OCI-LY7 (cell line): ENCODE measurements at regions of chr6 and their contacts with region 1.

Region 1: GRCh38 chr6:87929843-87930288 is 117.8 kb upstream of the SPACA1 start:
- DNase-seq: peak; percentile 95
- H3K4me3 ChIP-seq: peak overlapping the region; percentile 10
- H3K27ac ChIP-seq: peak overlapping the region; percentile 99
- H3K4me1 ChIP-seq: peaks cover 91% of the 10 kb centered on the region
- CTCF ChIP-seq: peak; percentile 98

Region 2: DNA sequence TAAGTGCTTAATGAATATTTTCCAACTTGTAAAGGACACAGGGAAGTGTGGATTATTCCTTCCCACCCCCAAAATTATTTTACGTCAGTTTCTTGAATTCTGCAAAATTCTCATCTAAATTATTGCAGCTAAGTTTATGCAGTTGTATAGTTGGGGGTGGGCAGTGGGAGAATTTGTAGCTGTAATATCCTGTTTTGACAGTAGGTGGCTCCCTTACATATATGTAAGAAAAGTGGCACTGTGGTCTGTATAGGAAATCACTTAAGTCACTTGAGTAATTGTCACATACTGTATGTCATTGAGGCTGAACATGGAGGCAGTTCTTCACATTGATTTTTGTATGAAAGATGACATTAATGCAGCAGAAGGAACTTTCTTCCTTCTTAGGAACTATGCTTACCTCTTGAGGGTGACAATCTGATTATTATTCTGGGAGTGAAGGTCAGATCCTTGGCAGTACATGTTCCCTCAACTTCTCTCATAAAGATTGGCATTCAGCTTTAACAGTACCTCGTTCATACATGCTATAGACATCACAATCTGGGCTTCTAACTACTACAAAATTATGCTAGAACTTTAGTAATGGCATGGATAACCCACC is 536.7 kb before region 1 on chr6:
- CTCF ChIA-PET with region 1: no interaction called
- POLR2A ChIA-PET with region 1: no interaction called
- intact Hi-C with region 1: loop called (anchors 10 kb)
- DNase-seq: peak; percentile 88
- H3K4me3 ChIP-seq: no peak overlapping the region
- H3K27ac ChIP-seq: no peak overlapping the region
- H3K4me1 ChIP-seq: peaks cover 19% of the 10 kb centered on the region
- CTCF ChIP-seq: peak; percentile 94

Region 3: DNA sequence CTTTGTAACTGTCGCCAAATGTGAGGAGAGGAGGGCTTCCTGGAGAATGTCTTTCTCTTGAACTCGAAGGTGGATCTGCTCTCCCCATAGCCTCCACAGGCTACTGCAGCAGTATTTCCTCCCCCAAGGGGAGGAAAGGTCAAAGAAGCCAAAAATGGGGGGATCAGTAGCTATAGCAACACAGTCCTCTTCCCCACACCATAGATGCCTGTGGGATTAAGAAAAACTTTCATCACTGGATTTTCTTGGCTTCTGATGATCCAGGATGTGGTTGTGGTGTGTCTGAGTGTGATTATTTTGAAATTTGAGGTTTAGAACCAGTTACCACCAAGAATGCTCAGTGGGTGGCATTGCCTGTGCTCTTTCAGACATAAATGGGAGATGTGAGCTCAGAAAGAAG is 22.3 kb before region 1 on chr6:
- CTCF ChIA-PET with region 1: interaction called, 3 read pairs
- POLR2A ChIA-PET with region 1: interaction called, 70 read pairs
- intact Hi-C with region 1: no loop called
- DNase-seq: peak; percentile 72
- H3K4me3 ChIP-seq: no peak overlapping the region
- H3K27ac ChIP-seq: peak overlapping the region; percentile 99
- H3K4me1 ChIP-seq: peaks cover 98% of the 10 kb centered on the region
- CTCF ChIP-seq: no peak

Region 4: DNA sequence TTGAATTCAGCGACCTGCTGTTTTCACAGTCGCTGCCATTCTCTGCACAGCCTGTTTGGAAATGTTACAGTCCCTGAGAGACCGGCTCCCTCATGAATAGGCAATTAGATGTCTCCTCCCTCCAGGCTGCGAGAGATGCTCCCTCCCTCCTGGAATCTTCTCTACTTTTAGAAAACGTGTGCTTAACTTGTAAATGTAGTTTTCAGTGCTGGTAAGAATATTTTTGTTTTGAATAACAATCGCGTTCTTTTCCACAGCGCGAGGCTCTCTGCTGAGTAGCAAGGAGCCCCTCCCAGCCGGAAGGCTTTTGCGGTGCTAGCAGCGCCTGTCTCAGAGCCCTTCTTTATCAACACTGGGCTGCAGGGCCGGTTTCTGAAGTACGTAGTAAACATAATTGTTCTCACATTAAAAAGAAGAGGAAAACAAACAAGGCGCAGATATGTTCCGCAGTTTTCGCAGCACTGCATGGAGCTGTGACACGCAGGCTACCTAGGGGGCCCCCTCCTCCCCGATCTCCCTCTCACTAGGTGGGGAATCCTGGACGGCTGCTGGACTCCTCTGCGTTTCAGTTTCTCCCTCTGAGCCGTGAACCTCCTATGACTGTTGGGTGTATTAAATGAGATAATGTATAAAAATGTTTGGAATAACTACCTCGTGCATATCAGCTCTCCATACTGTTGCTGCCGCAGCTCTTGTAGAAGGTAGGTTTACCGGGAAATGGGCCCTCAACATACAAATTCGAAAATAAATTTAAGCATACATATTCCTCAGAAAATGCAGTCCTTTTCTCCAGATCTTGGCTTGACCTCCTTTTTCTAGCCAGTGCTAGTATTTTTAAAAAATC is 38.8 kb after region 1 on chr6:
- CTCF ChIA-PET with region 1: no interaction called
- POLR2A ChIA-PET with region 1: no interaction called
- intact Hi-C with region 1: no loop called
- DNase-seq: peak; percentile 58
- H3K4me3 ChIP-seq: peak overlapping the region; percentile 65
- H3K27ac ChIP-seq: no peak overlapping the region
- H3K4me1 ChIP-seq: peaks cover 13% of the 10 kb centered on the region
- CTCF ChIP-seq: peak; percentile 75

Region 5: DNA sequence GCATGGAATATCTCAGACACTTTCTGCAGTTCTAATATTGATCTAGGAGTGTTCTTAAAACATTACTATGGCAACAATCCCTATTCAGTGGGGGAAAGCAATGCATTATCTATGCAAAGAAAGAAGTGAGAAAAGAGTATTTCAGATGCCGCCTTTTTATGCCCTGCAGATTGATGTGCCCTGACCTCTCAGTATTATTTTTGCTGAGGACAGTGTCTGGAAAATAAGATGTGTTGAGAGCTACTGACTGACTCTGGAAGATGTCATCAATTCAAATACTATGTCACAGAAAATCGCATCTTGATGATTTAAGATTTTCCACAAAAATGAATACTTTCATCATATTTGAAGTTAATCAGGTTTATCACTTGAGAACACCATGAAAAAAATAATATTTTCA is 94.8 kb after region 1 on chr6:
- CTCF ChIA-PET with region 1: no interaction called
- POLR2A ChIA-PET with region 1: no interaction called
- intact Hi-C with region 1: no loop called
- DNase-seq: no peak
- H3K4me3 ChIP-seq: no peak overlapping the region
- H3K27ac ChIP-seq: no peak overlapping the region
- H3K4me1 ChIP-seq: peaks cover 11% of the 10 kb centered on the region
- CTCF ChIP-seq: no peak

Region 6: GRCh38 chr6:88141561-88142296 is 211.9 kb after region 1 on chr6:
- CTCF ChIA-PET with region 1: interaction called, 3 read pairs
- POLR2A ChIA-PET with region 1: interaction called, 3 read pairs
- intact Hi-C with region 1: loop called (anchors 1 kb)
- DNase-seq: peak; percentile 95
- H3K4me3 ChIP-seq: peak overlapping the region; percentile 49
- H3K27ac ChIP-seq: peak overlapping the region; percentile 89
- H3K4me1 ChIP-seq: peaks cover 58% of the 10 kb centered on the region
- CTCF ChIP-seq: no peak; the same call in 1 of the 2 replicates

Region 7: DNA sequence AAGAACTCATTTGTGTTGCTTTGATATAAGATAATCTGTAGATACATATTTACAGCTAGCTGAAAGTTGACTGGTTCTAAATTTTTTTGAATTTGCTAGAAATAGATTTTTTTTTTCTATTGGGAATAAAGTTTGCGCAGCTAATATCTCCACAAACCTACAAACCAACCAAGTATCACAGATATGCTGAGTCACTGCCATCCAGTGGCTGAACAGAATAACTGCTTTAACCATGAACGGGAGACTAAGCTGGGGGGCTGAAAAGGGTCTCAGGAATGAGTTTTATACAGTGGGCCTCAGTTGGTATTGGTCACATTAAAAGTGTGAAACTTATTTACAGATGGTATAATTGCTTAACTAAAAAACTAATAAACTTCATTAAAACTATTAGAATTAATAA is 563.0 kb after region 1 on chr6:
- CTCF ChIA-PET with region 1: no interaction called
- POLR2A ChIA-PET with region 1: no interaction called
- intact Hi-C with region 1: loop called (anchors 2 kb)
- DNase-seq: peak; percentile 53
- H3K4me3 ChIP-seq: no peak overlapping the region
- H3K27ac ChIP-seq: no peak overlapping the region
- H3K4me1 ChIP-seq: peaks cover 27% of the 10 kb centered on the region
- CTCF ChIP-seq: peak; percentile 82

Region 8: GRCh38 chr6:88662163-88662580 is 732.3 kb after region 1 on chr6:
- CTCF ChIA-PET with region 1: no interaction called
- POLR2A ChIA-PET with region 1: no interaction called
- intact Hi-C with region 1: no loop called
- DNase-seq: no peak
- H3K4me3 ChIP-seq: no peak overlapping the region
- H3K27ac ChIP-seq: no peak overlapping the region
- H3K4me1 ChIP-seq: no peaks in the 10 kb centered on the region
- CTCF ChIP-seq: no peak

Region 9: GRCh38 chr6:88870717-88871330 is 941.0 kb after region 1 on chr6:
- CTCF ChIA-PET with region 1: no interaction called
- POLR2A ChIA-PET with region 1: no interaction called
- intact Hi-C with region 1: loop called (anchors 2 kb)
- DNase-seq: peak; percentile 79
- H3K4me3 ChIP-seq: no peak overlapping the region
- H3K27ac ChIP-seq: no peak overlapping the region
- H3K4me1 ChIP-seq: peaks cover 16% of the 10 kb centered on the region
- CTCF ChIP-seq: peak; percentile 96